ENCODE measurements at regions of chr2 and their contacts with region 1.

Region 1: DNA sequence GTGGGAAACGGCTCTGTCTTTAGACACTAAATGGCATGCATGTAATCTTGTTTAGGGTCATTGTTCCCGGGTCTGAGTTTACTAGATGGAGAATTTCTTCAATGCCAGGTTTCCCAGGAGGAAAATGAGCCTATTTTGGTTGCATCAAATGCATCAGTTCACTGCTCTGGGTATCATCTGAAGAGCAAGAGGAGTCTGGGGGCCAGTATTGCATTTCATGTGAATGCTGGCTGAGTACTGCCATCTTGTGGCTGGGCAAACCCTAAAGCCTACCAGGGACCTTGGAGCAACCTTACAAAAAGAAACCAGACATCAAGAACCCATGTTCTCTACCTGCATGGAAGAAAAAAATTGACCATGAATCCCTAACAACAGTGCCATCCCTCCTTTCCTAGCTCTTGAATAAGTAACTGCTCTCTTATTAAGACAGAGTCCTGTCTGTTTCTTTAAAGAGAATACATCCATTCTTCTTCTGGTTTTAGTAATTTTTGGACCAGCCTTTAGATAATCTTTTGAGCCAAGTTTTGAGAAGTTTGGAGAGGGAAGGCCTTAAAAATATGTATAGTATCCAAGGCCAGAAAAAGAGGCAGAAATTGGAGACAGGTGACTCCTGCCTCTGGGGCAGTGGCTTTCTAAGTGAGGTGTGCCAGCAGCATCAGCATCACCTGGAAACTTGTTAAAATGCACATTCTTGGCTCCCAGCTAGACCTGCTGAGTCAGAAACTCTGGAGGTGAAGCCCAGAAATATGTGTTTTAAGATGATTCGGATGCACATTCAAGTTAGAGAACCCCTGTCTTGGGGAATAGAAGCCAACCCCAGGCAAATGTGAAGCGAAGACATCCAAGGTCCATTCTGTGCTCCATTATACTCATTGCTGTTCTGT is 261.0 kb upstream of the CXCR4 start:
- DNase-seq: no peak
- H3K4me3 ChIP-seq: no peak overlapping the region
- CTCF ChIP-seq: no peak
- POLR2A ChIP-seq: no peak

Region 2: GRCh38 chr2:135913727-135914365 is 465.1 kb before region 1 on chr2:
- intact Hi-C with region 1: loop called (anchors 10 kb)
- DNase-seq: peak in 1 of 2 donors; percentile 28
- H3K4me3 ChIP-seq: no peak overlapping the region
- CTCF ChIP-seq: no peak
- POLR2A ChIP-seq: no peak

Region 3: DNA sequence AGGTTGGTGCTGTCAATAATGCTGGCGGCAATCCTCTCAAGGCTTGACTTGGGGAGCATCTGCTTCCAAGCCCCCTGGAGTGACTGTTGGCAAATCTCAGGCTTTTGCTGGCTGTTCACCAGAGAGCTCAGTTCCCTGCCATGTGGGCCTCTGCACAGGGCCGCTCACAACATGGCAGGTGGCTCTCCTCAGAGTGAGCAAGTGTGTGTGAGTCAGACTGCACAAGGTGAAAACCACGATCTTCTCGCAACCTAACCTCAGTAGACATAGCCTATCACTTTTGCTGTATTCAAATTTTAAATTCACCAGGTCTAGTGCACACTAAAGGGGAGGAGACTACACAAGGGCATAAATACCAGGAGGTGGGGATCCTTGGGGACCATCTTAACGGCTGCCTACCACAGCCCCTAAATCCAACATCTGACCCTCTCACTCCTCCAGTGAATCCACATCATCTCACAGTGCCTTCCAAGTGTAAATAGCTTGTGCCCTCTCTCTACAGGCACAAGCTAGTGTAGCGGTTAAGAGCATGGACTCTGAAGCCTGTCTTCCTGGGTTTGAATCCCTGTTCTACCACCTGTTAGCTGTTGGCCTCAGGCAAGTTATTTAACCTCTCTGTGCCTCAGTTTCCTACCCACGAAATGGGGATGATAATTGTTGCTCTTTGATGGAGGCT is 73.3 kb before region 1 on chr2:
- intact Hi-C with region 1: no loop called
- DNase-seq: no peak
- H3K4me3 ChIP-seq: no peak overlapping the region
- CTCF ChIP-seq: no peak
- POLR2A ChIP-seq: no peak

Region 4: GRCh38 chr2:136638193-136638592 is 259.2 kb after region 1 on chr2:
- intact Hi-C with region 1: no loop called
- DNase-seq: no peak
- H3K4me3 ChIP-seq: no peak overlapping the region
- CTCF ChIP-seq: no peak
- POLR2A ChIP-seq: no peak

Measured in lower leg skin (tissue), 4 donors.